ENCODE measurements at regions of chr4 and their contacts with region 1.

Region 1: DNA sequence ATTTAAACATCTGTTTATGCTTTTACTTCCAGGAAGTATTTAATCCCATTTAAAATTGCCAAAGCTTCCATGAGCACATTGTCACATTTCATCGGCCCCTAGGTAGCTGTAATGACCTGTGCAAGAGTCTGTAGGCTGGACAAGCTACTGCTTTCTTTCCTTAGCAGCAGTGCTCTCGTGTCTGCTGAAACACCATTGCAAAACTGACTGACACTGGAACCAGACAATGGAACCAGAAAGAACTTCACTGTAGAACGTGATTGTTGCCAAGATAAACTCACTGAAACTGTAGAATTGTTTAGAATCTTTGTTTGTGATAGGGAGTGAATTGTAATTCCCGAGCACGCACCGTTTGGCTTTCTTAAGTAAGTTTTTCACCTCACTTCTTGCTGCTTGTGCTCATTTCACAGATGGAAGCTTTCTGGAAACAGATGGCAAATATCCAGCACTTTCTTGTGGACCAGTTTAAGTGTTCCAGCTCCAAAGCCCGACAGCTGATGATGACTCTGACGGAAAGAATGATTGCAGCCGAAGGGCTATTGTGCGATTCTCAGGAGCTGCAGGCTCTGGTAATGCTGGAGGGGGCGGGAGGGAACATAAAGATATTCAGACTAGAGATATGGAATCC is 36.9 kb downstream of the EVC start:
- DNase-seq: peak; percentile 96
- H3K4me3 ChIP-seq: no peak overlapping the region
- H3K27ac ChIP-seq: peak overlapping the region; percentile 81
- H3K27me3 ChIP-seq: no peaks in the 10 kb centered on the region
- CTCF ChIP-seq: no peak

Region 2: DNA sequence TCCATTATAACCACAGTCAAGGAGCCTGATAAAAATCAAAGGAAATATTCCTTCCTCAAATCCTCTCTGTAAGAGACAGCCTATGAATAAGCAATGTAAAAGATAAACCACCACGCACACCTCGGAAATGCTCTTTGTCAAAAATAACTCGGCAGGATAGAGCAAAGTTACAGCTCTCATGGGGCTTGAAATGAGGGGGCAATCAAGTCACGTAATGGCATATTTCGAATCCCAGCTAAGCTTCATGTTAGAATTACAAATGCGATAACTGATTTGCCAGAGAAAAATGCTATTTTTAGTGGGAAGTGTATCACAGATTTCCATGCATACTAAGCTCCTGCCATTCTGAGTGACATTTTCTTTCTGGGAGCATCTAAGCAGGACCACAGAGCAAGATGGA is 88.9 kb before region 1 on chr4:
- CTCF ChIA-PET with region 1: no interaction called
- POLR2A ChIA-PET with region 1: interaction called, 15 read pairs
- DNase-seq: no peak
- H3K4me3 ChIP-seq: no peak overlapping the region
- H3K27ac ChIP-seq: no peak overlapping the region
- H3K27me3 ChIP-seq: no peaks in the 10 kb centered on the region
- CTCF ChIP-seq: no peak

Region 3: DNA sequence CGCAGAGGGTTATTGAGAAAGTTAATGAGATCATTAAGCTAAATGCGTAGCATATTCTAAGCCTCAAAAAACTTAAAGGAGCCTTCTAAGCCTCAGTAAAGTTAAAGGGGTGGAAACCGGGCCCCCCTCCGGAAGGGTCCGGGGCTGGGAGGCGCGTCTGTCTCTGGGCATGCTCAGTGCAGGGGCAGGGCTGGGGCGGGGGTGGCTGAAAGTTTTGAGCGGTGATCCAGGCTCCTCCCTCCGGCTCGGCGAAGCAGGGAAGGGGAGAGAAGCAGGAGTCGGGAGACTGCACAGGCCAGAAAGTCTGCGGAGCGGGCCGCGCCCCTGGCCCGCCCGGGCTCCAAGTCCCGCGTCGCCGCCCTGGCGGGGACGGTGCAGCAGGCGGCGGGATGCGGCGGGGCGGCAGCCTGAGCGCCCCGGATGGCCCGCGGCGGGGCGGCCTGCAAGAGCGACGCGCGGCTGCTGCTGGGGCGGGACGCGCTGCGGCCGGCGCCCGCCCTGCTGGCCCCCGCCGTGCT is 36.8 kb before region 1 on chr4 and contains the start of gene EVC:
- CTCF ChIA-PET with region 1: no interaction called
- POLR2A ChIA-PET with region 1: interaction called, 11 read pairs
- DNase-seq: peak; percentile 36
- H3K4me3 ChIP-seq: peak within 1 kb of the TSS; percentile 91
- H3K27ac ChIP-seq: peak within 1 kb of the TSS; percentile 78
- H3K27me3 ChIP-seq: no peaks in the 10 kb centered on the region
- CTCF ChIP-seq: no peak
- polyA plus RNA-seq, gene EVC: 11.5 and 15.8 TPM in 2 replicates

Measured in AG04450 (cell line).